Activated naive CD4-positive, alpha-beta T cell treated with anti-CD3 and anti-CD28 coated beads for 36 hours (primary cell): ENCODE measurements at regions of chr1 and their contacts with region 1.

Region 1: DNA sequence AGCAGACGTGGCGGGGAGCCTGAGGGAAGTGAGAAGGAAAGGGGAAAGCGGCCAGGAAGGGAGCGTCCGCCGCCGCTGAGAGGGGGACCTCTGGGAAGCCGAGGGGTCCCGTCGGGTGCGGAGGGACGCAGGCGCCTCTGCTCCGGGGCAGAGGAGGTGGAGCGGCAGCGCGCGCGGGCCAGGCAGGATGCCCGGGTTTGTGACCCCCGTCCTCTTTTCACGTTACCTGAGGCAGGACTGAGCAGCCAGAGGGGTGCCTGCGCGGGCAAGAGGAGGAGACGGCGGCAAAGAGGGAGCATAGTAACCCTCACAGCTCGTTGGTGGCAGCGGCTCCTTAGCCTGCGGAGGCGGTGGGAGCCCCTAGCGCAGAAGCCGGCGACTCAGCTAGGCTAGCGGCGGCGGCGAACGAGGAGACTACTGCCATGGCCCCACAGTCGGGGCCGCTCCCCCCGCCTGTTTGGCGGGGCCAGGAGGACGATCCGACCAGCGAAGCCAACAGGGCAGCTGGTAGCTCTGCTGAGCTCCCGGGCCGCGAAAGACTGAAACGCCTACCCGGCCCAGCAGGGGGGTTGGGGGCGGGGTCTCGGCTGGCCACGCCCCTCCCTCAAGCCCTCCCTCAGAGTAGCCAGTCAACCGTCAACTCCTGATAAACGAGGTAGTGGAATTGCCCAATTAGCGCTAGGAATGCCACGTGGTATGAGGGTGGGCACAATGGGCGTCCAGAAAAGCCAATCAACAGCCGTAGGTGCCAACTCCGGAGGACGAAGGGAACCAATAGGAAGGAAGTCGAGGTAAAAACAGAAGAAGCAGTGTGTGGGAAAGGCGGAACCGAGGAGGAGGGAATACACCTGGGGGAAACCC is at the start of gene TESK2:
- DNase-seq: peak; percentile 99
- H3K4me3 Mint-ChIP-seq: no peak within 1 kb of the TSS
- H3K27ac Mint-ChIP-seq: no peak within 1 kb of the TSS
- H3K4me1 Mint-ChIP-seq: peaks cover 6% of the 10 kb centered on the region
- H3K27me3 Mint-ChIP-seq: no peaks in the 10 kb centered on the region
- total RNA-seq, gene TESK2: 4.8 to 6.7 TPM

Region 2: DNA sequence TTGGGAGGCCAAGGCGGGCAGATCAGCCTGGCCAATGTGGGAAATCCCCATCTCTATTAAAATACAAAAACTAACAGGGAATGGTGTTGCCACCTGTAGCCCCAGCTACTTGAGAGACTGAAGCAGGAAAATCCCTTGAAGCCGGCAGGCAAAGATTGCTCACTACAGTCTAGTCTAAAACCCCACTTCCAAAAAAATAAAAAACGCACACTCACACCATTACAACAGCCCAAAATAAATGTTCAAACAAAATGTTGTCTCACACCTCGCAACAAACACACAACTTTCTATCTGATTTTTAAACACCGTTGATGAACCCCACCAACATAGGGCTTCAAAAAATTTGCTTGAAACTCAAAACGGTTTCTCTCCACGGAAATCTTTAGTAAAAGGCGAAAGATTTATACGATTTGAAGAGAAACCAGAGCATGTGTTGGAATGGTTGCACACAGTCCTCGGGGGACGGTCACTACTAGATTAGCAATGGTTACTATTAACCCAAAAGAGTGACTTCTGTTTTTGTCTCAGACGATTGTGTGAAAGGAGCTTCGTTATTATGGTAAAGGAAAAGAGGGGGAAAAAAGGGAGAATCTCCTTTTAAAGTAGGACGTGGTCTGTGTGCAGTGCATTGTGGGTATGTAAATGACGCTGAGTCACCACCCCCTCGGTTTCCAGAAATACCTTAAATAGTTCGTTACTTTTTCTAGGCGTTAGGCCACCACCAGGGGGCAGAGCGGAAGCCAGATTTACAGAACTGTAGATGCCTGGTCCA is 759.9 kb before region 1 on chr1 and contains the start of gene RNU5D-1:
- CTCF ChIA-PET with region 1: interaction called, 3 read pairs
- intact Hi-C with region 1: loop called (anchors 2 kb)
- DNase-seq: peak; percentile 99
- H3K4me3 Mint-ChIP-seq: peak within 1 kb of the TSS; percentile 57
- H3K27ac Mint-ChIP-seq: peak within 1 kb of the TSS; percentile 99
- H3K4me1 Mint-ChIP-seq: peaks cover 46% of the 10 kb centered on the region
- H3K27me3 Mint-ChIP-seq: peaks cover 3% of the 10 kb centered on the region
- total RNA-seq, gene RNU5D-1: not detected

Region 3: DNA sequence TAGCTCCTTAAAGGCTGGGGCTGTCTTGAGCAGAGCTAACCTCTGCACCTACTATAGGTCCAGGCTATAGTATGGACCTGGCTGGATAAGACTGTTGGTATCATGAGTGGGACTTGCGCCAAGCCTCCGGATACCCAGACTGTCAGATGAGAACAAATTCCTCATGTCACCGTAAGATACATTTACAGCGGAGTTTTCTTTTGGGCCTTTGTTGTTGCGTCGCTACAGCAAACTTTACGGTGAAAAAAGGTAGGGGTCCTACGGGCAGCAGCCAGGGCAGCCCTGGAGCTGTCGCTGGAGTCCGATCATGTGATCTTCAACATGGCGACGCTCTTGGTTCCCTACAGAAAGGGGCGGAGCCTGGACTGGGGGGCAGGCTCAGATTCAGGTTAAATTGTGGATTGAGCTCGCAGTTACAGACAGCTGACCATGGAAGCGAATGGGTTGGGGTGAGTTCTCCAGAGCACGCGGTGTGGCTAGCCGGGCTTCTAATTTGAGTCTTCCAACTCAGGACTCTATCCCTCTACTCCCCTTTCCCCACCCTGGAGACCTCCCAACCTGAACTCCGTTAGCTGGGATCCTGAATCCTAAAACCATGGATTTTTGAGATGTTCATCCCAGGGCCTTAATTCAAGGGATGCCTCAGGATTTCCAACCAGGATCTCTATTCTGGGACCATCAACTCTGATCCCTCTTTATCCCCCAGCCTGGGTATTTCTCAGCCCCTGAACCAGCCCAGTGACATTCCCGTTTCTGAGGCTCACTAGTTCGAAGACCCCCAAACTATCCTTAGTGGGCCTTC is 478.8 kb before region 1 on chr1 and contains the start of gene UROD:
- CTCF ChIA-PET with region 1: interaction called, 16 read pairs
- intact Hi-C with region 1: loop called (anchors 1 kb)
- DNase-seq: peak; percentile 96
- H3K4me3 Mint-ChIP-seq: peak within 1 kb of the TSS; percentile 81
- H3K27ac Mint-ChIP-seq: peak within 1 kb of the TSS; percentile 89
- H3K4me1 Mint-ChIP-seq: peaks cover 36% of the 10 kb centered on the region
- H3K27me3 Mint-ChIP-seq: no peaks in the 10 kb centered on the region
- total RNA-seq, gene UROD: 117 to 126 TPM

Region 4: GRCh38 chr1:45339789-45340570 is 150.9 kb before region 1 on chr1 and contains the starts of genes MUTYH and TOE1:
- CTCF ChIA-PET with region 1: interaction called, 23 read pairs
- intact Hi-C with region 1: loop called (anchors 1 kb)
- DNase-seq: peak; percentile 95
- H3K4me3 Mint-ChIP-seq: peak within 1 kb of the TSS; percentile 100
- H3K27ac Mint-ChIP-seq: peak within 1 kb of the TSS; percentile 100
- H3K4me1 Mint-ChIP-seq: peaks cover 35% of the 10 kb centered on the region
- H3K27me3 Mint-ChIP-seq: no peaks in the 10 kb centered on the region
- total RNA-seq, gene MUTYH: 42.0 to 45.0 TPM
- total RNA-seq, gene TOE1: 23.0 to 23.8 TPM

Region 5: DNA sequence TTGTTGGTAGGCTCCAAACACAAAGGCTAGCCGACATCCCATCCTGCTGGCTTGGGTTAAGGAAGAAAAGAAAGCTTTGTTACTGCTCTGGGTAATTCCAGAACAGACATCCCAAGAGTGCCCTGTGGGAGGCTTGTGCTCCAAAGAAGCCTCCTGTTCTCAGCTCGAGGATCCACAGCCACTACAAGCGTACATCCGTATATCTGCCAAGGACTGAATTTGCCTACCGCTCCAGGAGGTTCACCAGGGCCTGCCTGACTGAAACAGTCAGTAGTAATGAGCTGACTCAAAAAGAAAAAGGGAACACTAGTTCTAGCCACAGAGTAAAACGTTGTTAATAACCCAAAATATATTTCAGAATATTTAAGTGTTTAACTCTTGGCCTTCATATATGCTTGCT is 125.8 kb before region 1 on chr1:
- CTCF ChIA-PET with region 1: interaction called, 175 read pairs
- intact Hi-C with region 1: loop called (anchors 1 kb)
- DNase-seq: no peak
- H3K4me3 Mint-ChIP-seq: no peak overlapping the region
- H3K27ac Mint-ChIP-seq: no peak overlapping the region
- H3K4me1 Mint-ChIP-seq: peaks cover 9% of the 10 kb centered on the region
- H3K27me3 Mint-ChIP-seq: no peaks in the 10 kb centered on the region

Region 6: DNA sequence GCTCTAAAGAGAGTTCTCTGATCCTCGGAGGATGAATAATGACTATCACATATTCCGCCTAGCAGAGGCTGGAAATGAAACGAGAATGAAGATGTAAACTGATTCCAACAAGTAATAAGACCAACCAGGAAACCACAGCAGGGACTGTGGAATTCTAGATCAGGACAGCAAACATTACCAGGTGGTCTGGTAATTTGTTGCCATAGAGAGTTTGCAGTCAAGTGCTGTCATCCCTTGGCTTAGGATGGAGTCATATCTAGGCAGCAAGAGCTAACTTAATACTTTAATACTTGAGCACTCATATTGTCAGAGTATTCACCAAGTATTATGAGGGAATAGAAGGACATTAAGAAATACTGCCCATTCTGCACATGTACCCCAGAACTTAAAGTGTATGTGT is 105.6 kb before region 1 on chr1:
- CTCF ChIA-PET with region 1: no interaction called
- intact Hi-C with region 1: no loop called
- DNase-seq: no peak
- H3K4me3 Mint-ChIP-seq: no peak overlapping the region
- H3K27ac Mint-ChIP-seq: no peak overlapping the region
- H3K4me1 Mint-ChIP-seq: no peaks in the 10 kb centered on the region
- H3K27me3 Mint-ChIP-seq: no peaks in the 10 kb centered on the region

Region 7: DNA sequence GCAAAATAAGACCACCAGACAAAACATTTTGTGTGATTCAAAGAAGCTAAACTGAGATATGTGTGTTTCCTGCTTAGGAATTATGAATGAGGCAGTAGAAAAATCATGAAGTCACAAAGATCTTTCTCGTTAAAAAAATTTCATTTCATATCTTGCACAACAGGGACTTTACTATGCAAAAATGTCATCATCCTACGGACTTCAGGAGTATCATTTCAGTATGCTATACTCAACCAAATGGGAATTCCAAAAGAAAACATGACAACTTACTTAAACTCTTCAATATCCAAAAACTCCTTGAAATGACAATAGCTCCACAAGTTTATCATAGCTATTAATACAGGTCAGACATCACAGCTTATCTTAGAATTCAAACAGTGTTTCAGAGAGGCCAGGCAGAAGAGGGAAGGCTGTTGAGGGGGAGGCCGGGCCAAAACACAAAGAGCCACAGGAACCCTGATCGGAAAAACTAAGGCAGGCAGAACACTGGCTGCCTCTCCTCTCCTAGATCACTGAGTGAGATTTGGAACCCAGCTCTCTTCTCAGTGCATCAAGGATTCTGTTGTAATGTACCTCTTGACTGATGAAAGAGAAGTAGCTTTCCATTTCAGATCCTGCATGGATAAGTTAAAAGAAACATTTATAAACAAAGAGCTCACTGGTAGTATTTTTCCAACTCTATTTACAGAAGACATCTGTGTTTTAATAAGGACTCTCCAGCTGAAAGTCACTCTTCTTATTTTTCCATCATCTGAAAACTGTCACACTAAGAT is 66.8 kb before region 1 on chr1:
- CTCF ChIA-PET with region 1: interaction called, 13 read pairs
- intact Hi-C with region 1: no loop called
- DNase-seq: no peak
- H3K4me3 Mint-ChIP-seq: no peak overlapping the region
- H3K27ac Mint-ChIP-seq: no peak overlapping the region
- H3K4me1 Mint-ChIP-seq: no peaks in the 10 kb centered on the region
- H3K27me3 Mint-ChIP-seq: no peaks in the 10 kb centered on the region

Region 8: DNA sequence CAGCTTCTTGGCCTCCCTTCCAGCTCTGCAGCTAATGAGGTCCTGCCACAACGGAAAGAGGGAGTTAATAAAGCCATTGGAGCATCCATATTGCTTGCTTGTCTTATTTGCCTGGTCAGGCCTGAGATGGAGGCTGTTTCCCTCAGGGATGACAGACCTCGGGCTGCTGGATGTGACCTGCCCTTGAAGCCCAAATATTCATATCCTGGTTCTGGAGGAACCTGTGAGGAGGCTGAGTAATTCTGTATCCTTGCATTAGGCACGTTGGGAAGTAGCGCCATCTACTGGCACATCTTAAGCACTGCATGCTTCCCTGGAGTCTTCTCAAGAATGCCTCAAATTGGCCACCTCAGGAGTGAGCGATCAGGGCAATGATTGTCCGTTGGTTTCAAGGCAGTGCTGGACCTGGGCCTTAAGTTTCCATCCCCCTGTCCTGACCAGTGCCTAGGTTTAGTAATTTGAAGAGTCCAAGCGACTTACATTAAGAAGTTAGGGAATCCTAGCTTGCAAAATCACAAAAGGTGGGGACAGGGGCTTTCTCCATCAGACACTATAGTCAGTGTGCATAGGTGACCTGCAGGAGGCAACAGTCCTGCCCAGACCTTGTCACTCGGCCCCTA is 79.2 kb after region 1 on chr1:
- CTCF ChIA-PET with region 1: interaction called, 25 read pairs
- intact Hi-C with region 1: no loop called
- DNase-seq: peak; percentile 87
- H3K4me3 Mint-ChIP-seq: no peak overlapping the region
- H3K27ac Mint-ChIP-seq: peak overlapping the region; percentile 34
- H3K4me1 Mint-ChIP-seq: peaks cover 2% of the 10 kb centered on the region
- H3K27me3 Mint-ChIP-seq: no peaks in the 10 kb centered on the region

Region 9: DNA sequence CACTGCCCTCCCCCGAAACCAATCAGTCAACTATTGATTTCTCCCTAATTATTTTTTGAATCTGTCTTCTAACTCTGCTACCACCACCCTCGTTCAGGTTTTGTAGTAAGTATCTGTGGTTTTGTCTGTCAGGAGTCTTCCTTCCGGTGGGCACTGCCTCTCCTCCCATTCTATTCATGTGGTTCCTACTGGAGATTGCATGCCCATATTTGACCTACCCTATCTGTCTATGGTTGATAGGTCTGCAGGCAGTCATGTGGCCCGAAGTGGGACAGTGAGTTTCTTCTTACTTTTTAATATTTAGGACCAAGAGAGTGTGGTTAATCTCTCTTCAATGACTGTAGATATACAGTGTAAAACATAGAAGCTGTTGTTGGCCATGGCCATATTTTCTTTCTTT is 294.7 kb after region 1 on chr1:
- CTCF ChIA-PET with region 1: no interaction called
- intact Hi-C with region 1: no loop called
- DNase-seq: peak; percentile 57
- H3K4me3 Mint-ChIP-seq: peak overlapping the region; percentile 41
- H3K27ac Mint-ChIP-seq: no peak overlapping the region
- H3K4me1 Mint-ChIP-seq: peaks cover 20% of the 10 kb centered on the region
- H3K27me3 Mint-ChIP-seq: peaks cover 4% of the 10 kb centered on the region

Region 10: GRCh38 chr1:46401964-46402626 is 911.2 kb after region 1 on chr1:
- CTCF ChIA-PET with region 1: no interaction called
- intact Hi-C with region 1: no loop called
- DNase-seq: no peak
- H3K4me3 Mint-ChIP-seq: no peak overlapping the region
- H3K27ac Mint-ChIP-seq: no peak overlapping the region
- H3K4me1 Mint-ChIP-seq: no peaks in the 10 kb centered on the region
- H3K27me3 Mint-ChIP-seq: no peaks in the 10 kb centered on the region